Activated B cell treated with CpG ODN at 0.5 μM for 24 hours (primary cell): ENCODE measurements at regions of chr1 and their contacts with region 1.

Region 1: GRCh38 chr1:228405987-228406265 is 709 bp downstream of the TRIM11 start:
- DNase-seq: no peak
- ATAC-seq: no peak
- H3K4me3 Mint-ChIP-seq: peak overlapping the region; percentile 90
- H3K27ac Mint-ChIP-seq: peak overlapping the region; percentile 73
- H3K4me1 Mint-ChIP-seq: peaks cover 42% of the 10 kb centered on the region
- H3K27me3 Mint-ChIP-seq: no peaks in the 10 kb centered on the region
- CTCF ChIP-seq: no peak

Region 2: GRCh38 chr1:228082135-228082891 is 323.6 kb before region 1 on chr1 and contains the start of gene ARF1:
- CTCF ChIA-PET with region 1: no interaction called
- POLR2A ChIA-PET with region 1: interaction called, 14 read pairs
- intact Hi-C with region 1: no loop called
- DNase-seq: peak; percentile 97
- ATAC-seq: peak; percentile 90
- H3K4me3 Mint-ChIP-seq: peak within 1 kb of the TSS; percentile 93
- H3K27ac Mint-ChIP-seq: peak within 1 kb of the TSS; percentile 88
- H3K4me1 Mint-ChIP-seq: peaks cover 45% of the 10 kb centered on the region
- H3K27me3 Mint-ChIP-seq: no peaks in the 10 kb centered on the region
- CTCF ChIP-seq: no peak
- total RNA-seq, gene ARF1: 209 and 213 TPM in 2 replicates

Region 3: GRCh38 chr1:228165372-228166169 is 240.4 kb before region 1 on chr1 and contains the start of gene IBA57:
- CTCF ChIA-PET with region 1: no interaction called
- POLR2A ChIA-PET with region 1: interaction called, 30 read pairs
- intact Hi-C with region 1: loop called (anchors 1 kb)
- DNase-seq: peak; percentile 100
- ATAC-seq: peak; percentile 85
- H3K4me3 Mint-ChIP-seq: peak within 1 kb of the TSS; percentile 90
- H3K27ac Mint-ChIP-seq: peak within 1 kb of the TSS; percentile 94
- H3K4me1 Mint-ChIP-seq: peaks cover 29% of the 10 kb centered on the region
- H3K27me3 Mint-ChIP-seq: no peaks in the 10 kb centered on the region
- CTCF ChIP-seq: no peak
- total RNA-seq, gene IBA57: 10.8 and 14.5 TPM in 2 replicates

Region 4: GRCh38 chr1:228180271-228180958 is 225.5 kb before region 1 on chr1:
- CTCF ChIA-PET with region 1: no interaction called
- POLR2A ChIA-PET with region 1: no interaction called
- intact Hi-C with region 1: no loop called
- DNase-seq: no peak
- ATAC-seq: peak; percentile 40
- H3K4me3 Mint-ChIP-seq: no peak overlapping the region
- H3K27ac Mint-ChIP-seq: no peak overlapping the region
- H3K4me1 Mint-ChIP-seq: peaks cover 3% of the 10 kb centered on the region
- H3K27me3 Mint-ChIP-seq: no peaks in the 10 kb centered on the region
- CTCF ChIP-seq: no peak

Region 5: DNA sequence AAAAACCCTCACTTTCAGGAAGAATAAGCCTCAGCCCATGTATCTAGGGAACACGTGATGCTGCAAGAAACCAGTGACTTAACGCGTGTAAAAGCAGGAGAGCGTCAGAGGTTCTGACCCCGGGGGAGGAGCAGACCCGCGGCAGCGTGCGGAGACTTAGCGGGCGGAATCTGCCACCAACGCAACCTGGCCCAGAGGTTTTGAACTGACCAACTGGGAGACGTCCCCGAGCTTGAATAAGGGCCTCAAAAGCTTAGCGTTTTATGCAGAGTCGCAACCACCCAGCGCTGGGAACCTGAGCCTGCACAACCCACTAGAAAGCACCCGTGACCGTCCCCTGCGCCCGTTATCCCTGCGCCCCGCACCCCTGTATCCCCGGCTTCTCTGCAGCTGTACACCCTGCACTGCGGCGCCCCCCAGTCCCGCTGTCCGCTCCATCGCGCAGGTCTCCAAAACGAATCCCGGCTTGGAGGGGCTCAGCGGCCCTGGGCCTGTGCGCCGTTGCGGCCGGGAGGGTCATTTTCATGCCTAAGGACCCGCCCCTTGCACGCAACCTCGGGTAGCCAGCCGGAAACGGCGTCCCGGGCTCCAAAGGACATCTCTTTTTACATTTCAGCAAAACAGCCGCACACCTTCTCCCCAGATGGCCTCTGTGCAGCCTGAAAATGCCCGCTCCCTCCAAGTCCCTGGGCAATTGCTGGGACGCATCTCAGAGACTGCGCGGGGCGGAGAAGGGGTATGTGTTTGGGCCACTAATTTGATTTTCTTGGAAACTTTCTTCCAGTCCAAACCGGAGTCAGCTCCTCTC is 40.1 kb after region 1 on chr1:
- CTCF ChIA-PET with region 1: no interaction called
- POLR2A ChIA-PET with region 1: interaction called, 10 read pairs
- intact Hi-C with region 1: no loop called
- DNase-seq: no peak
- ATAC-seq: peak; percentile 58
- H3K4me3 Mint-ChIP-seq: peak overlapping the region; percentile 75
- H3K27ac Mint-ChIP-seq: no peak overlapping the region
- H3K4me1 Mint-ChIP-seq: peaks cover 13% of the 10 kb centered on the region
- H3K27me3 Mint-ChIP-seq: peaks cover 65% of the 10 kb centered on the region
- CTCF ChIP-seq: no peak

Region 6: GRCh38 chr1:228486596-228487335 is 80.8 kb after region 1 on chr1:
- CTCF ChIA-PET with region 1: no interaction called
- POLR2A ChIA-PET with region 1: interaction called, 46 read pairs
- intact Hi-C with region 1: loop called (anchors 2 kb)
- DNase-seq: peak; percentile 65
- ATAC-seq: peak; percentile 64
- H3K4me3 Mint-ChIP-seq: peak overlapping the region; percentile 94
- H3K27ac Mint-ChIP-seq: peak overlapping the region; percentile 100
- H3K4me1 Mint-ChIP-seq: peaks cover 38% of the 10 kb centered on the region
- H3K27me3 Mint-ChIP-seq: no peaks in the 10 kb centered on the region
- CTCF ChIP-seq: no peak